Activated B cell treated with CpG ODN at 0.5 μM for 24 hours (primary cell): ENCODE measurements at regions of chr12 and their contacts with region 1.

Region 1: GRCh38 chr12:102484428-102484958 is 4.1 kb upstream of the IGF1 start:
- DNase-seq: peak; percentile 23
- ATAC-seq: peak; percentile 78
- H3K4me3 Mint-ChIP-seq: peak overlapping the region; percentile 70
- H3K27ac Mint-ChIP-seq: peak overlapping the region; percentile 87
- H3K4me1 Mint-ChIP-seq: peaks cover 23% of the 10 kb centered on the region
- H3K27me3 Mint-ChIP-seq: no peaks in the 10 kb centered on the region
- CTCF ChIP-seq: peak; percentile 87

Region 2: GRCh38 chr12:101407436-101408345 is 1076.8 kb before region 1 on chr12 and contains the start of gene ARL1:
- CTCF ChIA-PET with region 1: no interaction called
- POLR2A ChIA-PET with region 1: no interaction called
- intact Hi-C with region 1: loop called (anchors 10 kb)
- DNase-seq: peak; percentile 74
- ATAC-seq: peak; percentile 87
- H3K4me3 Mint-ChIP-seq: peak within 1 kb of the TSS; percentile 99
- H3K27ac Mint-ChIP-seq: peak within 1 kb of the TSS; percentile 97
- H3K4me1 Mint-ChIP-seq: peaks cover 24% of the 10 kb centered on the region
- H3K27me3 Mint-ChIP-seq: no peaks in the 10 kb centered on the region
- CTCF ChIP-seq: no peak
- total RNA-seq, gene ARL1: 45.4 and 49.5 TPM in 2 replicates

Region 3: GRCh38 chr12:102010265-102010994 is 474.1 kb before region 1 on chr12:
- CTCF ChIA-PET with region 1: no interaction called
- POLR2A ChIA-PET with region 1: no interaction called
- intact Hi-C with region 1: loop called (anchors 2 kb)
- DNase-seq: peak; percentile 23
- ATAC-seq: peak; percentile 96
- H3K4me3 Mint-ChIP-seq: peak overlapping the region; percentile 63
- H3K27ac Mint-ChIP-seq: peak overlapping the region; percentile 96
- H3K4me1 Mint-ChIP-seq: peaks cover 33% of the 10 kb centered on the region
- H3K27me3 Mint-ChIP-seq: no peaks in the 10 kb centered on the region
- CTCF ChIP-seq: no peak

Region 4: DNA sequence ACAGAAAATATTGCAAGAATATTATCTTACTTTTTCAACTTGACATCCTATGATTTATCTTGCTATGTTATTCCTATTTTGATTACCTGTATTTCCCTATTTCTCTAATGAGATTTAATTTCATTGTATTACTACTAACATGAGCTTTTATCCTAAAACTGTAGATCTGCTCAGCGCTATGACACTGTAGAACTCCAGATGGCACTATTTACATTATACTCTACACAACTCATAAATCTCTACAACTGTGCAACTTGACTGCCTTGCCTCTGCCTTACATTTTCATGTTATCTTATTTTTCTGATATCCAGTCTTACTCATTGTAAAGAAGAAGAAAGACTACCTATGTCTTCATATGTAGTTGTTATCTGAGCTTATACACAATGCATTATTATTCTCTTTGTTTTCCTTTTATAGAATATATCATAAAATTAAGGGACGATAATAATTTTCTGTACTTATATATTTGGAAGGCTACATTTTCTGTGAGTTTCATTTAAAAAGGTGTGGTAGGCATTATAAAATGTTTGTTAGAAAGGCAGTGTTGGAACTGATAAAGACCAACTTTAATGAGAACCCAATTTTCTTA is 388.7 kb before region 1 on chr12:
- CTCF ChIA-PET with region 1: interaction called, 4 read pairs
- POLR2A ChIA-PET with region 1: no interaction called
- intact Hi-C with region 1: loop called (anchors 10 kb)
- DNase-seq: no peak
- ATAC-seq: peak; percentile 49
- H3K4me3 Mint-ChIP-seq: no peak overlapping the region
- H3K27ac Mint-ChIP-seq: no peak overlapping the region
- H3K4me1 Mint-ChIP-seq: no peaks in the 10 kb centered on the region
- H3K27me3 Mint-ChIP-seq: no peaks in the 10 kb centered on the region
- CTCF ChIP-seq: no peak

Region 5: GRCh38 chr12:102119674-102120563 is 364.6 kb before region 1 on chr12 and contains the starts of genes NUP37 and PARPBP:
- CTCF ChIA-PET with region 1: no interaction called
- POLR2A ChIA-PET with region 1: no interaction called
- intact Hi-C with region 1: loop called (anchors 2 kb)
- DNase-seq: peak; percentile 90
- ATAC-seq: peak; percentile 98
- H3K4me3 Mint-ChIP-seq: peak within 1 kb of the TSS; percentile 95
- H3K27ac Mint-ChIP-seq: peak within 1 kb of the TSS; percentile 91
- H3K4me1 Mint-ChIP-seq: peaks cover 12% of the 10 kb centered on the region
- H3K27me3 Mint-ChIP-seq: no peaks in the 10 kb centered on the region
- CTCF ChIP-seq: no peak
- total RNA-seq, gene NUP37: 27.0 and 29.9 TPM in 2 replicates
- total RNA-seq, gene PARPBP: 4.6 and 5.0 TPM in 2 replicates

Region 6: DNA sequence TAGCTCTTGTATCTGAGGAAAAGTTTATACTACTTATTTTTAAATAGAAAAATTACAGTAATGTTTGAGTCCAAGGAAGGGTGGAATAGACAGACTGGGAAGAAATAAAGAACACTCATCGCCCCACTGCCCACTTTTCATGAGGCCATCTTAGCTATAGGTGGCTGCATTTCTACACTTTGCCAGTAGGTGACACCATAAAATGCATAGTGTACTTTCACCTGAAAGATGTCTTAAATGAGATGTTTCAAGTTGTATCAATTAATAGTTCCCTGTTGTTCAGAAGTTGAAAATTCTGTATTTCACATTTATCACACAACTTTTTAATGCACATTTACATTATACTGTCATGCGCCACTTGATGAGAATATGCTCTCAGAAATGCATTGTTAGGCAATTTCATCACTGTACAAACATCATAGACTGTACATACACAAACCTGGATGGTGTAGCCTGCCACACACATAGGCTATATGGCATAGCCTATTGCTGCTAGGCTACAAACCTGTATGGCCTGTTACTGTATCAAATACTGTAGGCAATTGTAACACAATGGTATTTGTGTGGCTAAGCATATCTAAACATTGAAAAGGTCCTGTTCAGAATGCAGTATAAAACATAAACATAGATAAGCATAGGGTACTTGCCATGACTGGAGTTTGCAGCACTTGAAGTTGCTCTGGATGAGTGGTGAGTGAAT is 314.4 kb before region 1 on chr12:
- CTCF ChIA-PET with region 1: interaction called, 5 read pairs
- POLR2A ChIA-PET with region 1: no interaction called
- intact Hi-C with region 1: loop called (anchors 1 kb)
- DNase-seq: no peak
- ATAC-seq: peak; percentile 54
- H3K4me3 Mint-ChIP-seq: no peak overlapping the region
- H3K27ac Mint-ChIP-seq: no peak overlapping the region
- H3K4me1 Mint-ChIP-seq: no peaks in the 10 kb centered on the region
- H3K27me3 Mint-ChIP-seq: no peaks in the 10 kb centered on the region
- CTCF ChIP-seq: no peak

Region 7: DNA sequence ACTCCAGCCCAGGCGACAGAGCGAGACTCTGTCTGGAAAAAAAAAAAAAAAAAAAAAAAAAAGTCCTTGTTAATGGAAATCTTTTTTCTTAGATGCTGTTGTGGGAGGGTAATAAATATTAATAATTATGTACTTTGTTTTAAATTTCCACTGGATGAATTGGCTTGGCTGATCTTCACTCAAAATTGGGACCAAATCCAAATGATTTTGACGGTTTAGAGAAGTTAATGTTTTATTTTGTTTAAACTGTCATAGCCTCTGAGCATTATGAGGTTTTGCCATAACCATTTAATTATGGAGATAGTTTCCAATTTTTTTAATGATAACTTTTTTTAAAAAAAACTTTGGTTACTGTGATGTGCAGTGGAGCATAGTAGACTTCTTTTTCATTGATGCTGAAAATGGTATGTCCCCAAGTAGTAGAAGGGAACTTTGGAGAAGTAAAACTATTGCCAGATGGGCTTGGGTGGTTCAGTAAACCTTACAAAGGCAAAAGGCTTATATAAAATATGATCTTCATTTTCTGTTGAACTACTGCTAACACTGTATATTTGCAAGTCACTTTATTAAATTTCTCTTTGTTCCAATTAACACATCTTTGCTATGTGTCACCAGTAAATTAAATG is 282.9 kb before region 1 on chr12:
- CTCF ChIA-PET with region 1: no interaction called
- POLR2A ChIA-PET with region 1: no interaction called
- intact Hi-C with region 1: no loop called
- DNase-seq: no peak
- ATAC-seq: no peak
- H3K4me3 Mint-ChIP-seq: no peak overlapping the region
- H3K27ac Mint-ChIP-seq: no peak overlapping the region
- H3K4me1 Mint-ChIP-seq: peaks cover 7% of the 10 kb centered on the region
- H3K27me3 Mint-ChIP-seq: no peaks in the 10 kb centered on the region
- CTCF ChIP-seq: no peak

Region 8: GRCh38 chr12:102388469-102388868 is 96.0 kb before region 1 on chr12:
- CTCF ChIA-PET with region 1: no interaction called
- POLR2A ChIA-PET with region 1: no interaction called
- intact Hi-C with region 1: no loop called
- DNase-seq: no peak
- ATAC-seq: no peak
- H3K4me3 Mint-ChIP-seq: no peak overlapping the region
- H3K27ac Mint-ChIP-seq: no peak overlapping the region
- H3K4me1 Mint-ChIP-seq: no peaks in the 10 kb centered on the region
- H3K27me3 Mint-ChIP-seq: peaks cover 9% of the 10 kb centered on the region
- CTCF ChIP-seq: no peak

Region 9: GRCh38 chr12:102498471-102498870 is 14.0 kb after region 1 on chr12:
- CTCF ChIA-PET with region 1: interaction called, 10 read pairs
- POLR2A ChIA-PET with region 1: no interaction called
- intact Hi-C with region 1: no loop called
- DNase-seq: no peak
- ATAC-seq: no peak
- H3K4me3 Mint-ChIP-seq: no peak overlapping the region
- H3K27ac Mint-ChIP-seq: no peak overlapping the region
- H3K4me1 Mint-ChIP-seq: peaks cover 4% of the 10 kb centered on the region
- H3K27me3 Mint-ChIP-seq: peaks cover 16% of the 10 kb centered on the region
- CTCF ChIP-seq: no peak